Gastrocnemius medialis (tissue), 4 donors: ENCODE measurements at regions of chr6 and their contacts with region 1.

Region 1: DNA sequence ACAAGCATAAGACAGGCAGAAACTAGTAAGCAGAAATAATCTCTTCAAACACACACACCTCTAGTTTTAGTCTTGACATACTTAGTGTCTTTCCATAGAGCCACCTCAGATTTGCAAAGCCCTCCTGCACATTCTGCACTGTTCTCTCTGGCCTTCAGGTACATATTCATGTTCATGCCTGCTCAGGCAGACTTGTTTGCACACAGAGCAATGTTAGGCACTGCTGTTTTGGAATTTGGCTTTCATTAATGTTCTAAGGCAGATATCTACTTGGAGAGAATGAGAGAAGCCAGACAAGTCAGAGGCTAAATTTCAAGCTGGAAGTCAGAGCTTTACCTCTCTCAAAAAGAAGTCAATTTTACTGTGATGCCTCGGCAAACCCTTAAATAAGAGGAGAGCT is 21.3 kb upstream of the DST start:
- DNase-seq: no peak
- ATAC-seq: peak in 1 of 2 donors; percentile 21
- H3K4me3 ChIP-seq: no peak overlapping the region
- H3K27ac ChIP-seq: peak overlapping the region; percentile 52 to 65 (median 57)
- H3K4me1 ChIP-seq: peaks cover 26 to 33% of the 10 kb centered on the region in 2 donors
- H3K27me3 ChIP-seq: no peaks in the 10 kb centered on the region
- CTCF ChIP-seq: no peak
- POLR2A ChIP-seq: no peak

Region 2: GRCh38 chr6:56693246-56693607 is 29.2 kb after region 1 on chr6:
- in situ Hi-C with region 1: no loop called
- intact Hi-C with region 1: loop called (anchors 2 kb)
- DNase-seq: peak; percentile 81 to 90
- ATAC-seq: peak; percentile 80 to 86
- H3K4me3 ChIP-seq: peak overlapping the region; percentile 46 to 56 (median 50)
- H3K27ac ChIP-seq: peak overlapping the region; percentile 89 to 96 (median 94)
- H3K4me1 ChIP-seq: peaks cover 54 to 57% of the 10 kb centered on the region in 2 donors
- H3K27me3 ChIP-seq: no peaks in the 10 kb centered on the region
- CTCF ChIP-seq: no peak
- POLR2A ChIP-seq: peak in 1 of 2 donors; percentile 31

Region 3: DNA sequence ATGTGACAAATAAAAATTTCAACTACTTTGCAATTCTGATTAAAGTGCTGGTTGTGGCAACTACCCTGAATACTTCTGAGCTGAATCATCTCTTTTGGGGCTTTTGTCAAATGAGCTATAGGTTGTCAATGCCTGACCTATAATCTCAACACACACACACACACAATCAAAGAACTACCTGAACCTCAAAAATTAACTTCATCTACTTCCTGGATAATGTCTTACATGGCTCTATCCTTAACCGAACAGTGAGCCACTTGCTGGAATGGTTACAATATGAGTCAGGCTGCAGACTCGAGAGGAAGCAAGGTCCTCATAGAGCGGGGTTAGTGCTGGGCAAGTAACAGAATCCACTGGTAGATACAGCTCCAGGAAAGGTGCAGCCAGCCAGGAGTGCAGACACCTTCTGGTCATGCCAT is 49.2 kb after region 1 on chr6:
- in situ Hi-C with region 1: no loop called
- intact Hi-C with region 1: no loop called
- DNase-seq: peak; percentile 53 to 84
- ATAC-seq: peak; percentile 93 to 98
- H3K4me3 ChIP-seq: no peak overlapping the region
- H3K27ac ChIP-seq: peak overlapping the region; percentile 25 to 64 (median 44)
- H3K4me1 ChIP-seq: peaks cover 54 to 62% of the 10 kb centered on the region in 2 donors
- H3K27me3 ChIP-seq: no peaks in the 10 kb centered on the region
- CTCF ChIP-seq: no peak
- POLR2A ChIP-seq: no peak

Region 4: GRCh38 chr6:56742122-56742791 is 78.2 kb after region 1 on chr6:
- in situ Hi-C with region 1: no loop called
- intact Hi-C with region 1: no loop called
- DNase-seq: no peak
- ATAC-seq: peak in 1 of 2 donors; percentile 19
- H3K4me3 ChIP-seq: no peak overlapping the region
- H3K27ac ChIP-seq: peak overlapping the region in 1 of 4 donors; percentile 7
- H3K4me1 ChIP-seq: peaks cover 47 to 61% of the 10 kb centered on the region in 2 donors
- H3K27me3 ChIP-seq: no peaks in the 10 kb centered on the region
- CTCF ChIP-seq: no peak
- POLR2A ChIP-seq: no peak

Region 5: GRCh38 chr6:56956046-56956335 is 292.0 kb after region 1 on chr6:
- in situ Hi-C with region 1: no loop called
- intact Hi-C with region 1: no loop called
- DNase-seq: no peak
- ATAC-seq: no peak
- H3K4me3 ChIP-seq: peak overlapping the region; percentile 41 to 80 (median 58)
- H3K27ac ChIP-seq: no peak overlapping the region
- H3K4me1 ChIP-seq: peaks cover 8 to 15% of the 10 kb centered on the region in 2 donors
- H3K27me3 ChIP-seq: no peaks in the 10 kb centered on the region
- CTCF ChIP-seq: no peak
- POLR2A ChIP-seq: no peak